BJ (cell line): ENCODE measurements at regions of chr15 and their contacts with region 1.

Region 1: GRCh38 chr15:69413822-69414700 is at the start of gene KIF23:
- DNase-seq: peak; percentile 78
- H3K4me3 ChIP-seq: peak within 1 kb of the TSS; percentile 72
- H3K27me3 ChIP-seq: no peaks in the 10 kb centered on the region
- CTCF ChIP-seq: no peak
- polyA plus RNA-seq, gene KIF23: 33.9 and 35.2 TPM in 2 replicates

Region 2: GRCh38 chr15:69452692-69453521 is 38.8 kb after region 1 on chr15 and contains the start of gene RPLP1:
- CTCF ChIA-PET with region 1: interaction called, 4 read pairs
- POLR2A ChIA-PET with region 1: interaction called, 13 read pairs
- DNase-seq: peak; percentile 61
- H3K4me3 ChIP-seq: peak within 1 kb of the TSS; percentile 91
- H3K27me3 ChIP-seq: no peaks in the 10 kb centered on the region
- CTCF ChIP-seq: no peak
- polyA plus RNA-seq, gene RPLP1: 1,124 and 1,191 TPM in 2 replicates